CD4-positive, alpha-beta memory T cell (primary cell): ENCODE measurements at regions of chr4 and their contacts with region 1.

Region 1: GRCh38 chr4:86921608-86922252 is 13.1 kb upstream of the AFF1 start:
- DNase-seq: no peak
- H3K4me3 ChIP-seq: no peak overlapping the region
- H3K4me3 Mint-ChIP-seq: no peak overlapping the region
- H3K27ac ChIP-seq: no peak overlapping the region
- H3K27ac Mint-ChIP-seq: no peak overlapping the region
- H3K4me1 ChIP-seq: no peaks in the 10 kb centered on the region
- H3K4me1 Mint-ChIP-seq: peaks cover 0 to 4% (median 2%) of the 10 kb centered on the region in 4 donors
- H3K27me3 ChIP-seq: no peaks in the 10 kb centered on the region
- H3K27me3 Mint-ChIP-seq: no peaks in the 10 kb centered on the region

Region 2: DNA sequence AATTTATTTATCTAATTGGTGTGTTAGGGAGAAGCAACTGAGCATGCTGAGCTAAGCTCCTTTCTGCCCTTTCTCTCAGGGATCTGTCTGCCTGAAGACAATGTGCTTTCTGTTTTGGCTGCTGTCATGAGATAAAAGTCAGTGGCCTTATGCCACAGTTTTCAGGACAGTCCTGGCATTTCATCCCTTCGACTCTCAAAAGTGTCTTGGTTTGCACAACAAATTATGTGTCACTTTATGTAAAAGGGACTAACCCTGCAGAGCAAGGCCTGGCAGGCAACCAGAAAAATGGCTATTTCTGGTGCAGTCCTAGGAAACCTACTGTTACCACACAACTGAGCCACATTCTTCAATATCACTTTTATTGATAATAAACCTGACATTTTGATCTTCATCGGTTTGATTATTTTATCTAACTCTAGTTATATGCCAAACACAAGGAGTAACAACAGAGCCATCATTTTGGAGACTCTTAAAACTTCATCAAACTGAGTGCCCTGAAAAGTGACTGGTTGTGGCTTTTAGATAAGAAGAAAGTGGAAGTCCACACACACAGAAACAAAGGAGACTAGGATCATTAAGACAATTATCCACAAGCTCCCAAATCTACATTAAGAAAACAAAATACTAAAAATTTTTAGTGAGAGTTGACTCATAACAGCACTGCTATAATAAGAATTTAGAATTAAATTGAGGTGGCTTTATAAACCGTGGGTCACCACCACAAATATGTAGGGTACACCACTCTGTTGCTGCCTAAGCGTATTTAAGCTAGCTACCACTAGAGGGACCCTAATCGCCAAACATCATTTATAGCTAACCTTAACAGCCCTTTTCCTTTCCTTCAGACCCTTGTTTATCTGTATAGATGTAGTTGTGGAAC is 423.5 kb before region 1 on chr4:
- CTCF ChIA-PET with region 1: interaction called, 11 read pairs
- POLR2A ChIA-PET with region 1: no interaction called
- intact Hi-C with region 1: no loop called
- DNase-seq: peak in 4 of 5 donors; percentile 26 to 40 (median 30)
- H3K4me3 ChIP-seq: no peak overlapping the region
- H3K4me3 Mint-ChIP-seq: no peak overlapping the region
- H3K27ac ChIP-seq: no peak overlapping the region
- H3K27ac Mint-ChIP-seq: no peak overlapping the region
- H3K4me1 ChIP-seq: no peaks in the 10 kb centered on the region
- H3K4me1 Mint-ChIP-seq: no peaks in the 10 kb centered on the region
- H3K27me3 ChIP-seq: no peaks in the 10 kb centered on the region
- H3K27me3 Mint-ChIP-seq: peaks cover 1 to 5% of the 10 kb centered on the region in 2 donors

Region 3: DNA sequence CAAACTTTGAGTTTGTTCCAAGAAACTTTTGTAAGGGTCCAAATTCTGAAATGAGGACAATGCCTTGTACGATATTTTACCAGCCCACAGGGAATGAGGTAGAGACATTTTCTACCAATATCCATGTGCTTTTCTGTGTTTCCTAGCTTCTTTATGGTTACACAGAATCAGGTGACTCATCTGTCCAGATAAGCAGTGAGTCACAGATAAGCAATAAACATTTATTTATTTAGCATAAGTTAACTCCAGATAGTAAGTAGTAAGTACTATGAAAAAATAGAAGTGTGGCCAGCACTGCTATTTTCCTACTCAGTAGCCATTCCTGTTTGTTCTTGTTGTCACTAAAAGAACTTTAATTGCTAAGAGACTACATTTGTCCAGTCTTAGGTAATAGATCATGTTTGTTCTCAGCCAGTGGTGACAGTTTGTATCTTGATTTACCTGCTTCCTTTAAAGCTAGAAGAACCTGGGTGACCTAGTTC is 20.5 kb after region 1 on chr4:
- CTCF ChIA-PET with region 1: interaction called, 118 read pairs
- POLR2A ChIA-PET with region 1: interaction called, 3 read pairs
- intact Hi-C with region 1: no loop called
- DNase-seq: no peak
- H3K4me3 ChIP-seq: no peak overlapping the region
- H3K4me3 Mint-ChIP-seq: peak overlapping the region in 2 of 8 donors; percentile 12 to 71
- H3K27ac ChIP-seq: no peak overlapping the region
- H3K27ac Mint-ChIP-seq: peak overlapping the region in 2 of 7 donors; percentile 27 to 66
- H3K4me1 ChIP-seq: peaks cover 67% of the 10 kb centered on the region
- H3K4me1 Mint-ChIP-seq: peaks cover 45 to 88% (median 69%) of the 10 kb centered on the region in 4 donors
- H3K27me3 ChIP-seq: no peaks in the 10 kb centered on the region
- H3K27me3 Mint-ChIP-seq: no peaks in the 10 kb centered on the region

Region 4: GRCh38 chr4:87073199-87074120 is 151.7 kb after region 1 on chr4:
- CTCF ChIA-PET with region 1: interaction called, 11 read pairs
- POLR2A ChIA-PET with region 1: no interaction called
- intact Hi-C with region 1: no loop called
- DNase-seq: peak; percentile 37 to 57 (median 45)
- H3K4me3 ChIP-seq: peak overlapping the region in 1 of 2 donors; percentile 41
- H3K4me3 Mint-ChIP-seq: peak overlapping the region; percentile 61 to 83 (median 76)
- H3K27ac ChIP-seq: peak overlapping the region; percentile 21
- H3K27ac Mint-ChIP-seq: peak overlapping the region; percentile 20 to 82 (median 74)
- H3K4me1 ChIP-seq: peaks cover 27% of the 10 kb centered on the region
- H3K4me1 Mint-ChIP-seq: peaks cover 42 to 68% (median 54%) of the 10 kb centered on the region in 4 donors
- H3K27me3 ChIP-seq: no peaks in the 10 kb centered on the region
- H3K27me3 Mint-ChIP-seq: no peaks in the 10 kb centered on the region

Region 5: DNA sequence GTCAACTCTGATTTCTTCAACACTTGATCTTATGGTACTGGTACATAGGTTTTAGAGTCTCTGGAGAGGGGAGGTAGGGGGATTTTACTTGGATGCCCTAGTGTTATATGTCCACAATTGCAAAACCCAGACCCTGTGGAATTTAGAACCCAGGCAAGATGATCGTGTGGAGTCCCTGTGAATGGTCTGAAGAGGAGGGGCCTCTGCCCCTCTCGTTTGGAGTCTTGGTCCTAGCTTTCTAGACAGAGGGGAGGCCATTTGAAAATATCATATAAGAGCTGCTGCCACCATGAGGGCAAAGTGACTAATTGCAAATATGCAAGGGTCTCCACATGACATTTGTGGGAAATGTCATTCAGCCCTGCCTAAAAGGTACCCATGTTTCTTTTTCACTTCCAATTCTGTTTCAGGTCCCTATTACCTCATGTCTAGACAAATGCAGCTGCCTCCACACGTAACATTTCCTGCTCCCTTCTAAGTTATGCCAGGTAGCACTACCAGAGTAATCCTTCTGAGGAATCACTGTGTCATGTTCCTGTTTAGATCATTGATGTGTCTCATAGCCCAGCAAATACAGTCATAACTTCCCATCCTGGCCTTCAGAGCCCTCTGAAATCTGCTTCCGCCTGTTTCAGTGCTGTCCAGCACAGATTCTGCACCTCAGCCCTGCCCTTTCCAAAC is 171.9 kb after region 1 on chr4:
- CTCF ChIA-PET with region 1: interaction called, 380 read pairs
- POLR2A ChIA-PET with region 1: interaction called, 21 read pairs
- intact Hi-C with region 1: loop called (anchors 1 kb)
- DNase-seq: peak; percentile 38 to 61 (median 46)
- H3K4me3 ChIP-seq: no peak overlapping the region
- H3K4me3 Mint-ChIP-seq: no peak overlapping the region
- H3K27ac ChIP-seq: no peak overlapping the region
- H3K27ac Mint-ChIP-seq: peak overlapping the region; percentile 33 to 91 (median 82)
- H3K4me1 ChIP-seq: peaks cover 20% of the 10 kb centered on the region
- H3K4me1 Mint-ChIP-seq: peaks cover 17 to 29% (median 24%) of the 10 kb centered on the region in 4 donors
- H3K27me3 ChIP-seq: no peaks in the 10 kb centered on the region
- H3K27me3 Mint-ChIP-seq: no peaks in the 10 kb centered on the region

Region 6: DNA sequence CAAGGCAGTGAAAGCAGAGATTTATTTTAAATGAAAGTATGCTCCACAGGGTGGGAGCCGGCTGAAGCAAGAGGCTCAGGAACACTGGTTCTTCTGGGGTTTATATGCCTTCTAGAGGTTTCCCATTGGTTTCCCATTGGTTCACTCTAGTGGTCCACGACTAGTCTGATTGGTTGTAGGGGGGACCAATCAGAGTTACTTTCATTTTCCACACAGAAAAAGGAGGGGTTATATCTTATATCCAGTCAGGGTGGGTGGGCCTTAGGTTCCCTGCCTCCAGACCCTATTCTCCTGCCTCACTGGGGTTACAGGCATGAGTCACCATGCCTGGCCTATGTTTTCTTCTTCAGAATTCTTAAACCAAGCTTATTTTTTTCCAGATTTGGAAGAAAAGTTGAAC is 197.1 kb after region 1 on chr4:
- CTCF ChIA-PET with region 1: interaction called, 17 read pairs
- POLR2A ChIA-PET with region 1: no interaction called
- intact Hi-C with region 1: no loop called
- DNase-seq: no peak
- H3K4me3 ChIP-seq: no peak overlapping the region
- H3K4me3 Mint-ChIP-seq: no peak overlapping the region
- H3K27ac ChIP-seq: no peak overlapping the region
- H3K27ac Mint-ChIP-seq: peak overlapping the region in 5 of 7 donors; percentile 17 to 41 (median 24)
- H3K4me1 ChIP-seq: peaks cover 15% of the 10 kb centered on the region
- H3K4me1 Mint-ChIP-seq: peaks cover 16 to 46% (median 23%) of the 10 kb centered on the region in 4 donors
- H3K27me3 ChIP-seq: no peaks in the 10 kb centered on the region
- H3K27me3 Mint-ChIP-seq: no peaks in the 10 kb centered on the region

Region 7: DNA sequence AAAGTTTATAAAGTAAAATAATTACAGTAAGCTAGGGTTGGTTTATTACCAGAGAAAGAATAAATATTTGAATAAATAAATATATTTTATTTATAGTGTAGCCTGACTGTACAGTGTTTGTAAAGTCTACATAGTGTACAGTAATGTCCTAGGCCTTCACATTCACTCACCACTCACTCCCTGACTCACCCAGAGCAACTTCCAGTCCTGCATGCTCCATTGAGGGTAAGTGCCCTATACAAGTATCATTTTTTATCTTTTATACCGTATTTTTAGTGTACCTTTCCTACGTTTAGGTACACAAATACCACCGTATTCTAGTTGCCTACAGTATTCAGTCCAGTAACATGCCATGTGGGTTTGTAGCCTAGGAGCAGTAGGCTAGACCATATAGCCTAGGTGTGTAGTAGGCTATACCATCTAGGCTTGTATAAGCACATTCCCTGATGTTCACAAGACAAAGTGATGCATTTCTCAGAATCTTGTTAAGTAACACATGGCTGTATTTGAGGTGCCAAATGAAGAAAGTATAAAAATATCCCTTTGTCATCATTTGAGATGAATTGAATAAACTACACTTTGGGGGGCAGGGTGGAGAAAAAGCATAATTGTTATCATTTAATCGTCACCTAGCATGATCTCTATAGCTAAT is 313.4 kb after region 1 on chr4:
- CTCF ChIA-PET with region 1: interaction called, 35 read pairs
- POLR2A ChIA-PET with region 1: interaction called, 3 read pairs
- intact Hi-C with region 1: loop called (anchors 1 kb)
- DNase-seq: no peak
- H3K4me3 ChIP-seq: peak overlapping the region in 1 of 2 donors; percentile 47
- H3K4me3 Mint-ChIP-seq: peak overlapping the region in 6 of 8 donors; percentile 80 to 92 (median 84)
- H3K27ac ChIP-seq: no peak overlapping the region
- H3K27ac Mint-ChIP-seq: peak overlapping the region in 2 of 7 donors; percentile 1 to 50
- H3K4me1 ChIP-seq: peaks cover 5% of the 10 kb centered on the region
- H3K4me1 Mint-ChIP-seq: peaks cover 0 to 7% (median under 1%) of the 10 kb centered on the region in 4 donors
- H3K27me3 ChIP-seq: peaks cover 4% of the 10 kb centered on the region
- H3K27me3 Mint-ChIP-seq: peaks cover 2 to 6% of the 10 kb centered on the region in 2 donors